A549 (cell line): ENCODE measurements at regions of chr7 and their contacts with region 1.

Region 1: GRCh38 chr7:139620676-139621344 is 97.3 kb downstream of the CLEC2L start:
- DNase-seq: peak; percentile 48 to 65
- ATAC-seq: peak; percentile 76 to 90
- H3K4me3 ChIP-seq: no peak overlapping the region
- H3K27ac ChIP-seq: no peak overlapping the region
- H3K4me1 ChIP-seq: peaks cover 7% of the 10 kb centered on the region; the same call in 1 of the 3 replicates
- CTCF ChIP-seq: peak; percentile 60
- EP300 ChIP-seq: no peak
- POLR2A ChIP-seq: no peak
- RAD21 ChIP-seq: peak; percentile 58 to 66

Region 2: DNA sequence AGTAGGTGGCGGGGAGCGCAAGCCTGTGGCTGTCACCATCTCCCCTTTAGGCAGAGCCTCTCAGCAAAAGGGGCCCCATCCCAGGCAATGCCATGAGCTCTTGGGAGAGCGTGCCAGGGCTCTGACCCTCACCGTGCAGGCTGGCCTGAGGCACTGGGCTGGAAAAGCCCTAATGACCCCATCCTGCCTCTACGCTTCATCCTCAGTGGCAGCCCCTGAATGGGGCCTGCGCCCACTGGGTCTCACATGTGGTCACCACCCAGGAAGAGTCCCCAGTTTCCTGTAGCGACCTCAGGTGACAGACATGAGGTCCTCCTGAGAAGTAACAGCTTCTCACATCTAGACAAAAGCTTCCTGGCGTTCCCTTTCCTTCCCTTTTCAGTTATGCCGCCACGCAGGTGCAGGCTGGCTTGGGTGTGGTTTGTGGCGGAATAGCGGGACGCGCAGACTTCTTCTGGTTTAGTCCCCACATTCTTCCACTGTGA is 38.1 kb before region 1 on chr7:
- CTCF ChIA-PET with region 1: interaction called, 15 read pairs
- POLR2A ChIA-PET with region 1: no interaction called
- DNase-seq: no peak
- ATAC-seq: no peak
- H3K4me3 ChIP-seq: no peak overlapping the region
- H3K27ac ChIP-seq: no peak overlapping the region
- H3K4me1 ChIP-seq: no peaks in the 10 kb centered on the region
- CTCF ChIP-seq: no peak
- EP300 ChIP-seq: no peak
- POLR2A ChIP-seq: no peak
- RAD21 ChIP-seq: no peak

Region 3: GRCh38 chr7:139588632-139589031 is 32.2 kb before region 1 on chr7:
- CTCF ChIA-PET with region 1: interaction called, 37 read pairs
- POLR2A ChIA-PET with region 1: no interaction called
- DNase-seq: no peak
- ATAC-seq: peak in 1 of 2 experiments; percentile 51; a peak in 3 of 6 replicates
- H3K4me3 ChIP-seq: no peak overlapping the region
- H3K27ac ChIP-seq: no peak overlapping the region
- H3K4me1 ChIP-seq: no peaks in the 10 kb centered on the region
- CTCF ChIP-seq: no peak
- EP300 ChIP-seq: no peak
- POLR2A ChIP-seq: no peak
- RAD21 ChIP-seq: no peak

Region 4: DNA sequence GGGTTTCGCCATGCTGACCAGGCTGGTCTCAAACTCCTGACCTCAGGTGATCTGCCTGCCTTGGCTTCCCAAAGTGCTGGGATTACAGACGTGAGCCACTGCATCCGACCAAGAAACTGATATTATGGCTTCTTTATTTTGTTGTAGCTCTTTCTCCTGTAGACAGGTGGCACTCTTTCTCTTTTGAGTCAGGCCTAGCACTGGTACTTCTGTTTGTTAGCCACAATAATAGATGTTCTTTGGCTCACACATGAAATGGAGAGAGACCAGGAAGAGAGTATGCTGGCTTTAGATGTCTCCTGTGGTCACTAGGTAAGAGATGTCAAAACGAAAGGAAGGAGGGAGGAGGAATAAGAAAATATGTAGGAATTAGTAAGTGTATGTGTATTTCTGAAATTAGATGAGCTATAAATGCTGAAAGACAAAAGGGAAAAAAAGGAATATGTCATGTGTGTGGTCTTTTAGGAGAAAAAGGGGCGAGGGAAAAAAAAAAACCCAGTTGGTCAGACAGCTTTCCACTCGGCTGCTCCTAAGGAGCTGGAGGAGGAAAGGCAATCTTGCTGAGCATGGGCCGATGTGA is 18.6 kb before region 1 on chr7:
- CTCF ChIA-PET with region 1: interaction called, 37 read pairs
- POLR2A ChIA-PET with region 1: no interaction called
- DNase-seq: peak; percentile 45 to 56
- ATAC-seq: peak; percentile 86 to 94; a peak in 5 of 6 replicates
- H3K4me3 ChIP-seq: no peak overlapping the region
- H3K27ac ChIP-seq: no peak overlapping the region
- H3K4me1 ChIP-seq: no peaks in the 10 kb centered on the region
- CTCF ChIP-seq: peak; percentile 69
- EP300 ChIP-seq: no peak
- POLR2A ChIP-seq: no peak
- RAD21 ChIP-seq: peak; percentile 59 to 68; a peak in 4 of 5 replicates

Region 5: DNA sequence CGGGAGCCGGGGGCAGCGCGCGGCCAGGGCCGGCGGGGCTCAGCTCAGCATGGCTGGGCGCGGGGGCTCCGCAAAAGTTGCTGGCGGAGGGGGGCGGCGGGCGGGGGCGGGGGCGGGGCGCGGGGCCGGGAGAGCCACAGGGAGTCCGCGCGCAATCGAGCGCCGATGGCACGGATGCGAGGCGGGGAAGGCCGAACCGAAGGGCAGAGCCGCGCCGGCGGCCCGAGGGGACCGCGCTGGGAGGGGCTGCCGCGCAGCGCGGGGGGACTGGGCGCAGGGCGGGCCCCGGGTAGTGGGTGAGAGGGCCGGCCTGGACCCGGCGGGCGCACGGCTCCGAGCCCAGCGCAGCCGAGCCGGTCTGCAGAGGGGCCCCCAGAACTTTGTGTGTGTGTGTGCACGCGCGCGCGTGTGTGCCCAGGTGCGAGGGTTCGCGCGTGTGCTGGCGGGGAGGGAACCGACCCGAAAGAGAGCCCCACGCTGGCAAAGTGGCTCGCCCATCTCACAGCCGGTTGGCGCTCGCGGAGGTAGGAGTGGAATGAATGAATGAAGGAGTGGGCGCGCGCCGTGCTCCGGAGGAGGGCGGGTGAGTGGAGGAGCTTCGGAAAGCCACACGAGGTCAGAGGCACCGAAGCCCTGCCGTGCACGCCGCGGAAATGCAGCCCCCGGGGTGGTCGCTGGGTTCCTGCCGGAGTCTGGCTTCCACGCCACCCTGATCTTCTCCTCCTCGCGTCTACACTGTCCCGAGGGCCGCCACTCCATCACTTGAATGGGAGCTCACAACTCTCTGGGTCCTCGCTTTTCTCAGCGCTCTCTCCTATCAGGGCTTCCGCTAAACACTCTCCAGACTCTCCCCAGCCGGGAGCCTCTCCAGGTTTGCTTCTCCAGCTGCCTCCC is 157.4 kb after region 1 on chr7 and contains the start of gene HIPK2:
- CTCF ChIA-PET with region 1: interaction called, 10 read pairs
- POLR2A ChIA-PET with region 1: no interaction called
- DNase-seq: peak; percentile 65 to 76
- ATAC-seq: peak; percentile 72 to 76
- H3K4me3 ChIP-seq: peak within 1 kb of the TSS; percentile 99
- H3K27ac ChIP-seq: peak within 1 kb of the TSS; percentile 97 to 100
- H3K4me1 ChIP-seq: peaks cover 31% of the 10 kb centered on the region
- CTCF ChIP-seq: no peak
- EP300 ChIP-seq: no peak
- POLR2A ChIP-seq: peak; percentile 24
- RAD21 ChIP-seq: no peak; a peak in 2 of 5 replicates
- polyA plus RNA-seq, gene HIPK2: 12.1 and 16.3 TPM in 2 replicates

Region 6: GRCh38 chr7:139987691-139988516 is 367.1 kb after region 1 on chr7:
- CTCF ChIA-PET with region 1: interaction called, 15 read pairs
- POLR2A ChIA-PET with region 1: no interaction called
- DNase-seq: no peak
- ATAC-seq: no peak
- H3K4me3 ChIP-seq: no peak overlapping the region
- H3K27ac ChIP-seq: no peak overlapping the region
- H3K4me1 ChIP-seq: peaks cover 9% of the 10 kb centered on the region
- CTCF ChIP-seq: no peak; the same call in 2 of the 3 replicates
- EP300 ChIP-seq: no peak
- POLR2A ChIP-seq: no peak
- RAD21 ChIP-seq: no peak

Region 7: GRCh38 chr7:139995017-139995931 is 374.5 kb after region 1 on chr7:
- CTCF ChIA-PET with region 1: interaction called, 167 read pairs
- POLR2A ChIA-PET with region 1: no interaction called
- DNase-seq: no peak
- ATAC-seq: peak; percentile 49 to 65; a peak in 3 of 6 replicates
- H3K4me3 ChIP-seq: no peak overlapping the region
- H3K27ac ChIP-seq: peak overlapping the region; percentile 30 to 43; a peak in 2 of 6 replicates
- H3K4me1 ChIP-seq: peaks cover 17% of the 10 kb centered on the region
- CTCF ChIP-seq: no peak
- EP300 ChIP-seq: no peak
- POLR2A ChIP-seq: no peak
- RAD21 ChIP-seq: 0 out of 5 replicates have a peak, but pooled peaks of 1 of the 2 experiments have one; percentile 14